Activated CD8-positive, alpha-beta T cell treated with anti-CD3 and anti-CD28 coated beads for 36 hours (primary cell): ENCODE measurements at regions of chr1 and their contacts with region 1.

Region 1: DNA sequence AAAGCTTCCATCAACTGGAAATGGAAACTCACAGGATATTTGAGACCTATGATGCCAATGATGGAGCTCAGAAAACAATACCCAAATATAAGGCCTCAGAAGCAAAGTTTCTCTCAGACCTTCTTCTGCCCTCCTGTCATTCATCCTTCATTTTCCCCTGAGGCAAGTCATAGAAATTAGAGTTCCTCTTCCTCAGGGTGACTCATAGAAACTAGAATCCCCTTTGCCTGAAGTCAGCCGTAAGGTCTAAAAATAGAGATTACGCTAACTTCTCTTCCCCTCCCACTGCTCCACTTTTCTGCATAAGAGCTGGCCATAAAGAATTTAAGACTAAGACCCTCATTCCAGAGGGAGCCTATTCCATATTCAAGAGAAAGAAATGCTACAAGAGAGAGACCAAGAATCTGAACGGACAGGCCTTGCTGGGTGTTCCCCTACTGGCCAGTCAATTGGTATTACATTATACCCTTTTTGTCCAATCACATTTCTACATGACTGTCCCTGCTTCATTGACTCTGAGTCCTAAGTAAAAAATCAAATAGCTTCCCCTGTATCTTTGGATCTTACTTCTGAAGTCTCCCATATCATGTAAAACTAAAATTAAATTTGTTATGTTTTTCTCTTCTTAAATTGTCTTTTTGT is 994.9 kb downstream of the ADGRL2 start:
- DNase-seq: no peak
- ATAC-seq: no peak
- H3K4me3 Mint-ChIP-seq: no peak overlapping the region
- H3K27ac Mint-ChIP-seq: no peak overlapping the region
- H3K4me1 Mint-ChIP-seq: no peaks in the 10 kb centered on the region
- H3K27me3 Mint-ChIP-seq: peaks cover 3% of the 10 kb centered on the region
- CTCF ChIP-seq: no peak

Region 2: DNA sequence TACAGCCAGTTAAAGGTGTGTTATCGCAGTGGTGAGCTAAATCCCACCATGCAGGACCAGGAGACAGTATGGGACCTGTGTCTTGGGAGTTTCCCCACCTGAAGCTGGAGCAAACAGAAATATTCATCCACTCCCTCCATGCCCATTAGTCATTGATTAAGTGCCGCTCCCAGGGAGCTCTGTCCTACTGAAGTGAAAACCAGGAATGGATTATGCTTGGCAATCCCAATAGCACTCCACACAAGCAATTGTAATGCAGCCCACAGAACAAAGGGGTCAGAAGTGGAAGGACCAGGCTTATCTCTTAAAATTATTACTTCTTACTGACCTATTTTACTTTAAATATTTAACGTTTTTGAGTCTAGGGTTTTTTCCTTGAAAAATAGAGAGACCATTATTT is 10.5 kb after region 1 on chr1:
- CTCF ChIA-PET with region 1: interaction called, 10 read pairs
- POLR2A ChIA-PET with region 1: no interaction called
- intact Hi-C with region 1: no loop called
- DNase-seq: no peak
- ATAC-seq: no peak
- H3K4me3 Mint-ChIP-seq: no peak overlapping the region
- H3K27ac Mint-ChIP-seq: no peak overlapping the region
- H3K4me1 Mint-ChIP-seq: no peaks in the 10 kb centered on the region
- H3K27me3 Mint-ChIP-seq: no peaks in the 10 kb centered on the region
- CTCF ChIP-seq: no peak

Region 3: DNA sequence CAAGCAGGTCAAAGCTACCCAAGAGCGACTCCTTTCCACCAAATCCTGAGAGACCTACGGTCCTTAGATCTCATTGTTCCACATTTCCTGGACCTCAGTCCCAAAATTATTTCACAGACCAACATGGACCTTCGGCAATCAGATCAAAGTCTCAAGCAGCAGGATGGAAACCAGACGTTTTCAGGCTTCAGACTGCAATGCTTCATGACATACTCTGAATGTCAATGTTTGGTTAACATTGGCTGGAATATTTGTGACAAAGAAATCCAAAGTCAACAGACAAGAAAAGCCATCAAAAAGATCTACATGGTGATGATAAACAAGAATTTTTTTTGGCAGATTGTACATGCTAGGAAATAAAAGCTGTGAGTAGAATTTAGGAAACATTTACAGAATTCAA is 62.4 kb after region 1 on chr1:
- CTCF ChIA-PET with region 1: no interaction called
- POLR2A ChIA-PET with region 1: no interaction called
- intact Hi-C with region 1: no loop called
- DNase-seq: no peak
- ATAC-seq: no peak
- H3K4me3 Mint-ChIP-seq: no peak overlapping the region
- H3K27ac Mint-ChIP-seq: no peak overlapping the region
- H3K4me1 Mint-ChIP-seq: no peaks in the 10 kb centered on the region
- H3K27me3 Mint-ChIP-seq: no peaks in the 10 kb centered on the region
- CTCF ChIP-seq: no peak